ENCODE measurements at regions of chr16 and their contacts with region 1.

Region 1: GRCh38 chr16:30585400-30586189 is at the start of gene ZNF785:
- DNase-seq: peak; percentile 94 to 96 (median 95)
- H3K4me3 ChIP-seq: peak within 1 kb of the TSS; percentile 73 to 97
- H3K4me3 Mint-ChIP-seq: peak within 1 kb of the TSS; percentile 87 to 96 (median 91)
- H3K27ac ChIP-seq: peak within 1 kb of the TSS; percentile 79
- H3K27ac Mint-ChIP-seq: peak within 1 kb of the TSS; percentile 76 to 96 (median 93)
- H3K4me1 ChIP-seq: peaks cover 21% of the 10 kb centered on the region
- H3K4me1 Mint-ChIP-seq: peaks cover 9 to 38% (median 26%) of the 10 kb centered on the region in 4 donors
- H3K27me3 ChIP-seq: no peaks in the 10 kb centered on the region
- H3K27me3 Mint-ChIP-seq: no peaks in the 10 kb centered on the region
- total RNA-seq, gene ZNF785: 33.4 to 34.2 TPM

Region 2: GRCh38 chr16:30551781-30552180 is 33.8 kb before region 1 on chr16:
- CTCF ChIA-PET with region 1: interaction called, 6 read pairs
- POLR2A ChIA-PET with region 1: interaction called, 35 read pairs
- intact Hi-C with region 1: loop called (anchors 2 kb)
- DNase-seq: peak; percentile 80 to 91 (median 88)
- H3K4me3 ChIP-seq: peak overlapping the region in 1 of 2 donors; percentile 13
- H3K4me3 Mint-ChIP-seq: peak overlapping the region; percentile 76 to 85 (median 80)
- H3K27ac ChIP-seq: peak overlapping the region; percentile 60
- H3K27ac Mint-ChIP-seq: peak overlapping the region; percentile 94 to 98 (median 96)
- H3K4me1 ChIP-seq: peaks cover 66% of the 10 kb centered on the region
- H3K4me1 Mint-ChIP-seq: peaks cover 32 to 63% (median 49%) of the 10 kb centered on the region in 4 donors
- H3K27me3 ChIP-seq: no peaks in the 10 kb centered on the region
- H3K27me3 Mint-ChIP-seq: no peaks in the 10 kb centered on the region

Region 3: DNA sequence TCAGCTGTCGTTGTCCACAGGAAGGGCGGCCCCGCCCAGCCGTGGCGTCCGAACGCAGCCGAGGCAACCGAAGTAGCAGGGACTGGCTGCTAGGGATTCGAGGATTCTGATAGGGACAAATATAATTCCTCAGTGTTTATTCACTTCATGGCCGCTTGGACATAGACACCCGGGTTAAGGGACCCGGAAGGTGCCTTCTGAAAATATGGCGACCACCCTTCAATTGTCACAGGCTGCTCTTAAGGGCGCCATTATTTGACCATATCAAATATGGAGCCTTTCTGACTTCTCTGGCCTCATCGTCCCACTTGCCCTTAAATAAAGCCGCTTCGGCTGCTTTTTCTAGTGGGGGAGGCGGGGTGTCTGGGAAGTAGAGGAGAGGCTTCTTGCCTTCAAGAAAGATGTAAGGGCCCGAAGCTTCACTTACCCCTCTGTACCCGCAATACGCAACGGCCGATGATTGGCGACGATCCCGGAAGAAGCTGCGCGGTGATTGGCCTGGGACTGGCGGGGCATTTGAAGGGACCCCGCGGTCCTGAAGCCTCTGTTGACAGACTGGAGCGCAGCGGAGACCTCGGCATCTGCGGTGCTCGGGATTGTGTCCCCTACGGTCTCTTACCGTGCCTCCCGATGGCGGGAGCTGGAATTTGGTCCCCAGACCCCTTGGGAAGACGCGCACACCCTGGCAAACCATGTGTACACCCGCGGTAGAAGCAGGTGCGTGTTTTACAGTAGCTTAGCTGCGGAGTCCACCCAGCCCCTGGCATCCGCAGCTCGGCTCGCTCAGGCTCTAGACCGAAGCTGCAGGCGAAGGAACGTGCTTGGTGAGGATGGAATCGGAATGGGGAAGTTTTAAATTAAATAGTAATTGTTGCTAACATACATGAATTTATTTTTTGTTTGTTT is 13.6 kb before region 1 on chr16 and contains the start of gene ZNF688:
- CTCF ChIA-PET with region 1: interaction called, 3 read pairs
- POLR2A ChIA-PET with region 1: interaction called, 67 read pairs
- intact Hi-C with region 1: loop called (anchors 1 kb)
- DNase-seq: peak; percentile 94 to 100 (median 97)
- H3K4me3 ChIP-seq: peak within 1 kb of the TSS; percentile 65 to 71
- H3K4me3 Mint-ChIP-seq: peak within 1 kb of the TSS; percentile 86 to 96 (median 91)
- H3K27ac ChIP-seq: peak within 1 kb of the TSS; percentile 90
- H3K27ac Mint-ChIP-seq: peak within 1 kb of the TSS; percentile 96 to 97 (median 97)
- H3K4me1 ChIP-seq: peaks cover 50% of the 10 kb centered on the region
- H3K4me1 Mint-ChIP-seq: peaks cover 22 to 51% (median 36%) of the 10 kb centered on the region in 4 donors
- H3K27me3 ChIP-seq: no peaks in the 10 kb centered on the region
- H3K27me3 Mint-ChIP-seq: no peaks in the 10 kb centered on the region
- total RNA-seq, gene ZNF688: 21.4 to 22.7 TPM

Region 4: GRCh38 chr16:30609926-30610839 is 24.6 kb after region 1 on chr16 and contains the start of gene ZNF689:
- CTCF ChIA-PET with region 1: interaction called, 6 read pairs
- POLR2A ChIA-PET with region 1: interaction called, 8 read pairs
- intact Hi-C with region 1: loop called (anchors 1 kb)
- DNase-seq: peak; percentile 92 to 98 (median 95)
- H3K4me3 ChIP-seq: peak within 1 kb of the TSS; percentile 71 to 99
- H3K4me3 Mint-ChIP-seq: peak within 1 kb of the TSS; percentile 85 to 96 (median 94)
- H3K27ac ChIP-seq: peak within 1 kb of the TSS; percentile 97
- H3K27ac Mint-ChIP-seq: peak within 1 kb of the TSS; percentile 93 to 98 (median 96)
- H3K4me1 ChIP-seq: peaks cover 21% of the 10 kb centered on the region
- H3K4me1 Mint-ChIP-seq: peaks cover 10 to 18% (median 13%) of the 10 kb centered on the region in 4 donors
- H3K27me3 ChIP-seq: no peaks in the 10 kb centered on the region
- H3K27me3 Mint-ChIP-seq: no peaks in the 10 kb centered on the region
- total RNA-seq, gene ZNF689: 13.1 to 14.5 TPM

Measured in CD4-positive, alpha-beta memory T cell (primary cell).